ENCODE measurements at regions of chr14 and their contacts with region 1.

Region 1: GRCh38 chr14:105314287-105315200 is at the start of gene PACS2:
- DNase-seq: peak; percentile 73
- H3K4me3 Mint-ChIP-seq: peak within 1 kb of the TSS; percentile 88
- H3K27ac Mint-ChIP-seq: peak within 1 kb of the TSS; percentile 80
- H3K4me1 Mint-ChIP-seq: peaks cover 19% of the 10 kb centered on the region
- H3K27me3 Mint-ChIP-seq: no peaks in the 10 kb centered on the region
- total RNA-seq, gene PACS2: 35.2 and 36.8 TPM in 2 replicates

Region 2: GRCh38 chr14:104932676-104933631 is 381.6 kb before region 1 on chr14:
- intact Hi-C with region 1: no loop called
- DNase-seq: peak; percentile 81
- H3K4me3 Mint-ChIP-seq: peak overlapping the region; percentile 62
- H3K27ac Mint-ChIP-seq: no peak overlapping the region
- H3K4me1 Mint-ChIP-seq: peaks cover 2% of the 10 kb centered on the region
- H3K27me3 Mint-ChIP-seq: peaks cover 18% of the 10 kb centered on the region

Region 3: GRCh38 chr14:105193916-105194782 is 120.4 kb before region 1 on chr14:
- intact Hi-C with region 1: no loop called
- DNase-seq: no peak
- H3K4me3 Mint-ChIP-seq: no peak overlapping the region
- H3K27ac Mint-ChIP-seq: no peak overlapping the region
- H3K4me1 Mint-ChIP-seq: peaks cover 10% of the 10 kb centered on the region
- H3K27me3 Mint-ChIP-seq: peaks cover 27% of the 10 kb centered on the region

Region 4: DNA sequence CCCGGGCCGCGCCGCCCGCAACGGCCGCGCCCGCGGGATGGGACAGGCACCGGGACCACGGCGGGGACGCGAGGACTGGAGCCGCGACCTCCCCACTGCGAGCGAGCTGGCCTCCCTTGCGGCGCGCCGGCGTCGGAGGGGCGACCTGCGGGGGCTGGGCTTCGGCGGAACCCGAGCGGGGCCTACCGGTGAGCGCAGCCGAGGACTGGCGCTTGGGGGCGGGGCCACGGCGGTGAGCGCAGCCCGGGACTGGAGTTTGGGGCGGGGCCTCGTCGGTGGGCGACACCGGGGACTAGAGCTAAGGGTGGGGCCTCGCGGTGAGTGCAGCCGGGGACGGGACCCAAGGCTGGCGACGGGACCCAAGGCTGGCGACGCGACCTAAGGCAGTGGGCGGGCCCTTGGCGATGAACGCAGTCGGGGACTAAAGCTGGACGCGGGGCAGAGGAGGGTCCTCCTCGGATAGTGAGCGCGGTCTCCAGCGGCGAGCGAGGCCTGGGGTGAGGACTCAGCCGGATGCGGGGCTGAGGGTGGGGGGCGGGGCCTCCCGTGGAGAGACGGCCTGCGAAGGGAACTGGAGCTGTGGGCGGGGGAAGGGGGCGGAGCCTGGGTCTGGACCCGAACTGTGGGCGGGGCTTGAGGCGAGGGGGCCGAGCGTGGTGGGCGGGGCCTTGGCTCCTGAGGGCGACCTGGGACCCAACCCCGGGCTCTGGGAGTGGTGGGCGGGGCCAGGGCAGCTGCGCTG is 13.6 kb before region 1 on chr14 and contains the start of gene BRF1:
- intact Hi-C with region 1: loop called (anchors 1 kb)
- DNase-seq: peak; percentile 97
- H3K4me3 Mint-ChIP-seq: peak within 1 kb of the TSS; percentile 90
- H3K27ac Mint-ChIP-seq: peak within 1 kb of the TSS; percentile 92
- H3K4me1 Mint-ChIP-seq: peaks cover 25% of the 10 kb centered on the region
- H3K27me3 Mint-ChIP-seq: no peaks in the 10 kb centered on the region
- total RNA-seq, gene BRF1: 44.0 TPM in 2 replicates